MCF 10A (cell line): ENCODE measurements at regions of chr4 and their contacts with region 1.

Region 1: DNA sequence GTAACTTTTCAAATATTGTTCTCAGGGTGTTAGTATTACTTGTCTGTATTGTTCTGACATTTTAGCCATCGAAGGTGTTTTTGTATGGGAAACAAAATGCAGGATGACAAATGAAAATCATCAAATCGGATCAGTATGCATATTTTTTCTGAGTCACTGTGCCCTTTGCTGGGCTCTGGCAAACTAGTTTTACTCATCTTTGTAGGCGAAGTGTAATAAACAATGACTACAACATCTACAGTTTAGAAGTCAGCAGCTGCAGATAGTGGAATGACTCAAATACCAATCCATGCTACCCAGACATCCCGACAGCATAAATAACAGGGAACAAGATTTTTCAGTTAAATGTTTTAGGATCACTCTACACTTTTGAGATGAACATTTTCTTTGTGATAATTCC is 557.3 kb upstream of the TENM3 start:
- DNase-seq: peak; percentile 74
- H3K4me3 Mint-ChIP-seq: peak overlapping the region; percentile 7
- H3K27ac Mint-ChIP-seq: peak overlapping the region; percentile 32
- H3K4me1 Mint-ChIP-seq: peaks cover 14% of the 10 kb centered on the region
- H3K27me3 Mint-ChIP-seq: no peaks in the 10 kb centered on the region
- CTCF ChIP-seq: no peak

Region 2: GRCh38 chr4:181661090-181661489 is 24.8 kb before region 1 on chr4:
- CTCF ChIA-PET with region 1: interaction called, 3 read pairs
- POLR2A ChIA-PET with region 1: interaction called, 4 read pairs
- intact Hi-C with region 1: loop called (anchors 1 kb)
- DNase-seq: peak; percentile 69
- H3K4me3 Mint-ChIP-seq: peak overlapping the region; percentile 59
- H3K27ac Mint-ChIP-seq: peak overlapping the region; percentile 87
- H3K4me1 Mint-ChIP-seq: peaks cover 22% of the 10 kb centered on the region
- H3K27me3 Mint-ChIP-seq: no peaks in the 10 kb centered on the region
- CTCF ChIP-seq: no peak

Region 3: DNA sequence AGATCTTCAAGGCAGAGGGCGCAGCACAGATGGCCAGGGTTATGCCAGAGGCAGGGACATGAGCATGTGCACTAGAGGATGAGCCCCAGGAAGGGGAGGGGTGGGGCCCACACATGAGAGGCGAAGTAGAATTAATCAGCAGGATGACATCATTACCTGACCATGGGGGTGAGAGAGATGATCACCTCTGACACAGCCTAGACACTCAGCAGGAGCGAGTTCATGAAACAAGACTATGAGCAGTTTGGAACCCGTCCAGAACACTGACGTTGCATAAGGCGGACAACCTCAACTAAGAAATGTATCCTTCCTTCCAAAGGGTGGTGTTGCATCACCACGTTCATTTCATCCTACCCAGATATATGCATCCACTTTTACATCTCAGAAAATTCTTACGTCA is 110.6 kb after region 1 on chr4:
- CTCF ChIA-PET with region 1: interaction called, 4 read pairs
- POLR2A ChIA-PET with region 1: no interaction called
- intact Hi-C with region 1: loop called (anchors 10 kb)
- DNase-seq: peak; percentile 97
- H3K4me3 Mint-ChIP-seq: no peak overlapping the region
- H3K27ac Mint-ChIP-seq: peak overlapping the region; percentile 68
- H3K4me1 Mint-ChIP-seq: peaks cover 15% of the 10 kb centered on the region
- H3K27me3 Mint-ChIP-seq: no peaks in the 10 kb centered on the region
- CTCF ChIP-seq: no peak